ENCODE measurements at regions of chr18 and their contacts with region 1.

Region 1: GRCh38 chr18:76803814-76804213 is 18.5 kb upstream of the ZNF236 start:
- DNase-seq: peak; percentile 46 to 82 (median 75)
- ATAC-seq: peak; percentile 84
- H3K4me3 ChIP-seq: no peak overlapping the region
- H3K4me3 Mint-ChIP-seq: peak overlapping the region; percentile 43
- H3K27ac ChIP-seq: no peak overlapping the region
- H3K27ac Mint-ChIP-seq: no peak overlapping the region
- H3K4me1 ChIP-seq: peaks cover 7% of the 10 kb centered on the region
- H3K4me1 Mint-ChIP-seq: peaks cover 12% of the 10 kb centered on the region
- H3K27me3 ChIP-seq: peaks cover 0 to 5% of the 10 kb centered on the region in 2 experiments
- H3K27me3 Mint-ChIP-seq: peaks cover 16% of the 10 kb centered on the region
- CTCF ChIP-seq: peak; percentile 74

Region 2: GRCh38 chr18:76643996-76644395 is 159.8 kb before region 1 on chr18:
- CTCF ChIA-PET with region 1: no interaction called
- POLR2A ChIA-PET with region 1: no interaction called
- intact Hi-C with region 1: no loop called
- DNase-seq: no peak
- ATAC-seq: no peak
- H3K4me3 ChIP-seq: no peak overlapping the region
- H3K4me3 Mint-ChIP-seq: no peak overlapping the region
- H3K27ac ChIP-seq: no peak overlapping the region
- H3K27ac Mint-ChIP-seq: no peak overlapping the region
- H3K4me1 ChIP-seq: no peaks in the 10 kb centered on the region
- H3K4me1 Mint-ChIP-seq: no peaks in the 10 kb centered on the region
- H3K27me3 ChIP-seq: no peaks in the 10 kb centered on the region
- H3K27me3 Mint-ChIP-seq: peaks cover 5% of the 10 kb centered on the region
- CTCF ChIP-seq: no peak

Region 3: DNA sequence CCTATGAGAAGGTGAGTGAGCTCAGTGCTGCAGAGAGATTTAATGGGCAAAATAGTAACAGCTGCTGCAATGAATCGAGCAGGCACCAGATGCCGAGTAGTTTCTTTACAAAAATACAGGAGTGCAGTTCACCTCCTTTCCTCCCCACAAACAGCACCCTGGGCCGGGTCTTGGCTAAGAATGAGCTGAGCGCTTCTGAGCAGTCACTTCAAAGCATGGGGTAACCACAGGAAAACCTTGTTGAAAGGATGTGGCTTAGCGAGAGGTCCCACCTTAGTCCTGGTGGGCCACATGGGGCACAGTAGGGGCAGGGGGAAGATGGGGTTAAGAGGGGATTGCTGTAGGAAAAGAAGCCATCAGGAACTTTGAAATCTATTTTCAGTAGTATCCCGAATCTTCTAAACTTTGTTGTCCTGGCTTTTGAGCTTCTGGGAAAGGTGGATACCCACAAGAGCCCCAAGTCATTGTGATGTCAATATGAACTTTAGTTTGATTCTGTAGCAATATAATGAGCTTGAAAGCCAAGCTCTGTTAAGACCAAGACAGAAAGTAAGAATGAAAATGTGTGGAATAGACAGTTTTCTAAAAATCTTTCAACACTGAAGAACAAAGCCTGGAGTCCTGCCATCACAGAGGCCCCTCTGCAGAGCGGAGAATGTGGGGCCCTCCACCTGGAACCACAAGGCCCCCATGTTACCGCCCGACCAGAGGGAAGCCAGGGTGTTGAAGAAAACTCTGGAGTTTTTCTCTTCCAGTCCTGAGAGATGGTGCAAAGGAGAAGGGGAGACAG is 82.4 kb before region 1 on chr18:
- CTCF ChIA-PET with region 1: interaction called, 16 read pairs
- POLR2A ChIA-PET with region 1: no interaction called
- intact Hi-C with region 1: loop called in 1 of 2 experiments (anchors 5 kb)
- DNase-seq: peak; percentile 38 to 87 (median 71)
- ATAC-seq: peak; percentile 95
- H3K4me3 ChIP-seq: peak overlapping the region in 1 of 2 experiments; percentile 32
- H3K4me3 Mint-ChIP-seq: peak overlapping the region; percentile 68
- H3K27ac ChIP-seq: peak overlapping the region in 1 of 2 experiments; percentile 5
- H3K27ac Mint-ChIP-seq: peak overlapping the region; percentile 80
- H3K4me1 ChIP-seq: peaks cover 50% of the 10 kb centered on the region
- H3K4me1 Mint-ChIP-seq: peaks cover 45% of the 10 kb centered on the region
- H3K27me3 ChIP-seq: no peaks in the 10 kb centered on the region
- H3K27me3 Mint-ChIP-seq: peaks cover 12% of the 10 kb centered on the region
- CTCF ChIP-seq: no peak

Region 4: DNA sequence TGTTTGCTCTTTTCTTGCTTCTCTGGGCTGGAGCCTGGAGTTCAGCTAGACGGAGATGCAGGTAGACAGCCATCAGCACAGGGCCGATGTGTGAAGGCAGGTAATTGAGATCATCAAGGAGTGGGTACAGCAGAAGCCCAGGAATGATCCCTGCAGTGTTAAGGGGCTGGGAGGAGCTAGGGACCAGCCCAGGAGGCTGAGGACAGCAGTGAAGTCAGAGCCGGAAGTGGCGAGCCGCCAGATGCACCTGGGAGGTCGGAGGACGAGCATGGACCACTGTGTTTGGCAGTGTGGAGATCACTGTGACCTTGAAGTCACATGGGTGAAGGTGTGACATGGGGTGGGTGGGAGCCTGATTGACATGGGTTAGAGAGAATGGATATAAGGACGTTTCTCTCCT is 12.3 kb after region 1 on chr18:
- CTCF ChIA-PET with region 1: interaction called, 32 read pairs
- POLR2A ChIA-PET with region 1: interaction called, 4 read pairs
- intact Hi-C with region 1: no loop called
- DNase-seq: no peak
- ATAC-seq: no peak
- H3K4me3 ChIP-seq: no peak overlapping the region
- H3K4me3 Mint-ChIP-seq: no peak overlapping the region
- H3K27ac ChIP-seq: no peak overlapping the region
- H3K27ac Mint-ChIP-seq: peak overlapping the region; percentile 32
- H3K4me1 ChIP-seq: peaks cover 11% of the 10 kb centered on the region
- H3K4me1 Mint-ChIP-seq: peaks cover 33% of the 10 kb centered on the region
- H3K27me3 ChIP-seq: no peaks in the 10 kb centered on the region
- H3K27me3 Mint-ChIP-seq: no peaks in the 10 kb centered on the region
- CTCF ChIP-seq: no peak

Region 5: GRCh38 chr18:76866666-76867065 is 62.9 kb after region 1 on chr18:
- CTCF ChIA-PET with region 1: interaction called, 12 read pairs
- POLR2A ChIA-PET with region 1: no interaction called
- intact Hi-C with region 1: no loop called
- DNase-seq: no peak
- ATAC-seq: no peak
- H3K4me3 ChIP-seq: no peak overlapping the region
- H3K4me3 Mint-ChIP-seq: no peak overlapping the region
- H3K27ac ChIP-seq: no peak overlapping the region
- H3K27ac Mint-ChIP-seq: no peak overlapping the region
- H3K4me1 ChIP-seq: no peaks in the 10 kb centered on the region
- H3K4me1 Mint-ChIP-seq: peaks cover 4% of the 10 kb centered on the region
- H3K27me3 ChIP-seq: no peaks in the 10 kb centered on the region
- H3K27me3 Mint-ChIP-seq: no peaks in the 10 kb centered on the region
- CTCF ChIP-seq: no peak

Region 6: DNA sequence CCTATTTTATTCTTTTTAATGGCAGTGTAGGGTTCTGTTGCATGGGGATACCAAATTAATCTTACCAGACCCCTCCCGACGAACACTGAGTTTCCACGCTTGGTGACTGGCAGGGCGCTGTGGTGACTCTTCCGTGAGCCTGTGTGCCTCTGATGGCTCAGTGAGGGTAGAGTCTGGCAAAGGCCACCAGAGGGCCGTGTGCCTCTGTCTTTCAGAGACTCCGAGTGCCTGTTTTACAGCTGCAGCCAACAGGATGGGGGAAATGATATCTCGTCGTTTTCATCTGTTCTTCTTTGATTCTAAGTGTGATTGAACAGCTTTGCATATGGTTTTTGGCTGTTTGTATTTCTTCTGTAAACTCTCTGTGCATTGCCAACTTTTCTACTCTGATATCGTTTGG is 118.3 kb after region 1 on chr18:
- CTCF ChIA-PET with region 1: interaction called, 10 read pairs
- POLR2A ChIA-PET with region 1: no interaction called
- intact Hi-C with region 1: no loop called
- DNase-seq: peak in 8 of 9 experiments; percentile 34 to 73 (median 52)
- ATAC-seq: peak; percentile 99
- H3K4me3 ChIP-seq: no peak overlapping the region
- H3K4me3 Mint-ChIP-seq: no peak overlapping the region
- H3K27ac ChIP-seq: no peak overlapping the region
- H3K27ac Mint-ChIP-seq: peak overlapping the region; percentile 37
- H3K4me1 ChIP-seq: no peaks in the 10 kb centered on the region
- H3K4me1 Mint-ChIP-seq: peaks cover 15% of the 10 kb centered on the region
- H3K27me3 ChIP-seq: no peaks in the 10 kb centered on the region
- H3K27me3 Mint-ChIP-seq: no peaks in the 10 kb centered on the region
- CTCF ChIP-seq: peak; percentile 66

Region 7: DNA sequence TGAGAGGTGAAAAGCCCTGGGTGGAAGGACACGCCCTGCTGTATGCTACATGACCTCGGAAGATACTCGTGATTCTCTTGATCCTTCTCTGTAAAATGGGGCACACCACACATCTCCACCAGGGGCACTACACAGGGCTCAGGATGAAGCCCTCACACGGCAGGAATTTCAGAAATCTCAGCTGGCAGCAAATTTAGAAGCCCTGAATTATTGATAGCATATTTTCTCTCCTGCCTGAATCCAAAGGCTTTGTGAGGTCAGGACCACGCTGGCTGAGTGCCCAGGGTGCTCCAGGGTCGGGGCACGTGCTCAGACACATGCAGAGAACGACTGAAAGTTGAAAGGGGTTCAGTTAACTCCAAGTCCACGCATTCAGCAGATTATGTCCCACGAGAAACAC is 403.7 kb after region 1 on chr18:
- CTCF ChIA-PET with region 1: interaction called, 8 read pairs
- POLR2A ChIA-PET with region 1: no interaction called
- intact Hi-C with region 1: loop called in 1 of 2 experiments (anchors 5 kb)
- DNase-seq: peak; percentile 29 to 80 (median 58)
- ATAC-seq: peak; percentile 93
- H3K4me3 ChIP-seq: no peak overlapping the region
- H3K4me3 Mint-ChIP-seq: peak overlapping the region; percentile 62
- H3K27ac ChIP-seq: no peak overlapping the region
- H3K27ac Mint-ChIP-seq: peak overlapping the region; percentile 34
- H3K4me1 ChIP-seq: peaks cover 40% of the 10 kb centered on the region
- H3K4me1 Mint-ChIP-seq: peaks cover 46% of the 10 kb centered on the region
- H3K27me3 ChIP-seq: no peaks in the 10 kb centered on the region
- H3K27me3 Mint-ChIP-seq: peaks cover 2% of the 10 kb centered on the region
- CTCF ChIP-seq: peak; percentile 57